ENCODE measurements at regions of chr4 and their contacts with region 1.

Region 1: DNA sequence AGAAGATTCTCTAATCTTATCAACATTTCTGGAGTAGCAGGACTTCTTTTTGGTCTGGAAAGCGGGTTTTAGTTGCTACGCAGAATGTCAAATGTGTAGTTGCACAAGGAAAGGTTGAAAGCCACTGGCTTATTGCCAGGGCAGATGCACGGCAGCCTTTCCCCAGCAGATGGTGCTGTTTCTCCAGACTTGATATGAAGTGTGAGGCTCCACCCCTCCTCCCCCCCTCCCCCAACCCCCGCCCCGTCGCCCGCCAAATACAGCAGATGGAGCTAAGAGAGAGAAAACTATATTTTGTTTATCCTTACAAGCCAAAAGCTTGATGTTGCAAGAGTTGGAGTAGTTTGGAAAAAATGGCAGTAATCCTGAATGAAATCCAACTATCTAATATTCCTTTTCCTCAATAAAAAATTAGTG is 32.0 kb downstream of the ENOPH1 start:
- DNase-seq: peak; percentile 75 to 95 (median 86)
- ATAC-seq: peak; percentile 96
- H3K4me3 ChIP-seq: no peak overlapping the region
- H3K27ac ChIP-seq: no peak overlapping the region
- H3K4me1 ChIP-seq: no peaks in the 10 kb centered on the region
- H3K27me3 ChIP-seq: no peaks in the 10 kb centered on the region
- CTCF ChIP-seq: peak; percentile 85 to 91

Region 2: DNA sequence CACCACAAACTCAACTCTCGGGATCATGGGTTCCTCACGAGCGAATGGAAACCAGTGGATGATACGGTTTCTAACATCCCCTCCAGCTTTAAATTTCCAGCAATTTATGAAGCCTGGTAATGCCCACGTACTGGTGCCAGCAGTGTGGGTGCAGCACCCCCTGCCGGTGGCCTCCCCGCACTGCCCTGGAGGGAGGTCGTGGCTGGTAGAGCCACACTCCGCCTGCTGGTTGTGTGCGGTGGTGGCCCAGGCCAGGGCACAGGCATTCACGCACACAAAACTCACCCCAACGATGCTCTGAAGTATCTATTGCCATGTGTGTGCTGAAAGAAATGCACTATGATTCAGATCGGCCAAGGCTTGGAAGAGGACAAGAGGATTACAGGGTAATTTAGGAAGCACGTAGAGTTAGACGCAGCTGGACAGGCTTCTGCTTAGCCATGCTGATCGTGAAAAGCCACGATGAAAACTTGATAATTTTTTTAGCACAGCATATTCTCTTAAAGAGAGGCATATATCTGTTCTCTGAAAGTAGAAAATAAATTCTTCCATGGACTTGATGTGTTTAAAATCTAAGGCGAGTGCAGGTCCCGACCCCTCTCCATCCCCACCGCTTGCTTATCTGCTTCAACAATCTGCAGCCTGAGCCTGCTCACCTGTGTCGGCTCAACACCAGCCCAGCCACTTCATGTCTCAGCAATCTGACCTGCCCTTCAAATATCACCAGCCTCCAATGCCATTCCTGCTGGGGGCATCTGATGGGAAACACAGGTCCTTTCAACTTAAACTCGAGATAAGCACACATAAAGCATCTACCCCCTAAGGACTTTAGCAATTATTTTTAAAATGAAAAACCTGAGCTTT is 277.1 kb after region 1 on chr4:
- intact Hi-C with region 1: loop called in 1 of 2 experiments (anchors 5 kb)
- DNase-seq: peak in 3 of 4 donors; percentile 57 to 91 (median 65)
- ATAC-seq: peak; percentile 100
- H3K4me3 ChIP-seq: no peak overlapping the region
- H3K27ac ChIP-seq: no peak overlapping the region
- H3K4me1 ChIP-seq: no peaks in the 10 kb centered on the region
- H3K27me3 ChIP-seq: no peaks in the 10 kb centered on the region
- CTCF ChIP-seq: peak; percentile 93 to 96

Region 3: GRCh38 chr4:82801910-82802521 is 339.6 kb after region 1 on chr4:
- intact Hi-C with region 1: loop called in 1 of 2 experiments (anchors 10 kb)
- DNase-seq: peak in 1 of 4 donors; percentile 44
- ATAC-seq: no peak
- H3K4me3 ChIP-seq: no peak overlapping the region
- H3K27ac ChIP-seq: no peak overlapping the region
- H3K4me1 ChIP-seq: peaks cover 8 to 24% of the 10 kb centered on the region in 2 donors
- H3K27me3 ChIP-seq: peaks cover 0 to 44% of the 10 kb centered on the region in 2 donors
- CTCF ChIP-seq: peak in 1 of 2 donors; percentile 21

Measured in left lung (tissue), 14 donors.